ENCODE measurements at regions of chr6 and their contacts with region 1.

Region 1: GRCh38 chr6:107318100-107318736 is 141.1 kb downstream of the PDSS2 start:
- H3K4me3 ChIP-seq: no peak overlapping the region
- H3K27ac ChIP-seq: no peak overlapping the region
- H3K4me1 ChIP-seq: peaks cover 5% of the 10 kb centered on the region; the same call in 1 of the 2 replicates
- CTCF ChIP-seq: peak; percentile 48; the same call in 1 of the 2 replicates

Region 2: DNA sequence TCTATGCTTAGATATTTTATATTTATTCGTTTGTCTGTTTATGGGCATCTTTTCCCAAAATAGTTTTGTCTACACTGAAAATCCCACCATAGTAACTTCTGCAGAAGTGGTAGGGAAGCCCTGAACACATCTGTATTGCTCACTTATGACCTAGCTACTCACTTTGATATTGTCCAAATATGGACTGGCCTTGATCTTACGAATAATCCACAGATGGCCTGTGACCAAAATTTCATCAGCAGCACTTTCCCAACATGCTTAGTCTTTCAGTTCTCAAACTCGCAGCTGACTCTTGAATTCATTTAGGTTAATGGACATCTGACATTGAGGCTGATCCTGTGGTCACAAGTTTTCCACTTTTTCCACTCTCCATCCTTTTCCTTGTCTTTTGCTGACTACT is 122.1 kb before region 1 on chr6:
- CTCF ChIA-PET with region 1: no interaction called
- POLR2A ChIA-PET with region 1: no interaction called
- H3K4me3 ChIP-seq: no peak overlapping the region
- H3K27ac ChIP-seq: no peak overlapping the region
- H3K4me1 ChIP-seq: no peaks in the 10 kb centered on the region; the same call in 1 of the 2 replicates
- CTCF ChIP-seq: no peak

Region 3: DNA sequence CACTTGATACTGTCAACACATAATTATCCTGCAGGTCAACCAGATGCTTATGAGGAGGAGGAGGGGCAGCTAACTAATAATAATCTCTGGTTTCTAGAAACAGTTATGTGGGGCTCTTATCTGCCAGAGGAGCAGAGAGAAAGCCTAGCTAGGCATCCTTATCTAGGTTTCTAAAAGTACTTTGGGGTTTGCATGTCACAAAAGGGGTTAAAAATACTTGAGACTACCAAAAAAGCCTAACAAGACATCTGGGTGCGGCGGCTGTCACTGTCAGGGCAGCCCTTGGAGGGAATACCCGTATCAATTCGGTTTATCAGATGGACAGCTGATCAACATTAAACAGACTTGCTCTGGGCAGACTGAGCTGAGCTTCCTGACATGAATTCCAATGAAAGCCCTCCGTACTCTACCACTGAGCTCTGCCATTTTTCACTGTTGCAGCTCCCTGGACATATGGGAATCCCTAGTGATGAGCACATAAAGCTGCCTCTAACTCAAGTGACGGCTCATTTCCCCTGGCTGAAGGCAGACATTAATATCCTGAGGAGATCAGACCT is 25.4 kb before region 1 on chr6:
- CTCF ChIA-PET with region 1: interaction called, 14 read pairs
- POLR2A ChIA-PET with region 1: no interaction called
- H3K4me3 ChIP-seq: no peak overlapping the region
- H3K27ac ChIP-seq: no peak overlapping the region
- H3K4me1 ChIP-seq: no peaks in the 10 kb centered on the region; the same call in 1 of the 2 replicates
- CTCF ChIP-seq: no peak

Region 4: GRCh38 chr6:107342144-107342543 is 23.9 kb after region 1 on chr6:
- CTCF ChIA-PET with region 1: interaction called, 19 read pairs
- POLR2A ChIA-PET with region 1: no interaction called
- H3K4me3 ChIP-seq: no peak overlapping the region
- H3K27ac ChIP-seq: no peak overlapping the region
- H3K4me1 ChIP-seq: no peaks in the 10 kb centered on the region
- CTCF ChIP-seq: no peak

Region 5: DNA sequence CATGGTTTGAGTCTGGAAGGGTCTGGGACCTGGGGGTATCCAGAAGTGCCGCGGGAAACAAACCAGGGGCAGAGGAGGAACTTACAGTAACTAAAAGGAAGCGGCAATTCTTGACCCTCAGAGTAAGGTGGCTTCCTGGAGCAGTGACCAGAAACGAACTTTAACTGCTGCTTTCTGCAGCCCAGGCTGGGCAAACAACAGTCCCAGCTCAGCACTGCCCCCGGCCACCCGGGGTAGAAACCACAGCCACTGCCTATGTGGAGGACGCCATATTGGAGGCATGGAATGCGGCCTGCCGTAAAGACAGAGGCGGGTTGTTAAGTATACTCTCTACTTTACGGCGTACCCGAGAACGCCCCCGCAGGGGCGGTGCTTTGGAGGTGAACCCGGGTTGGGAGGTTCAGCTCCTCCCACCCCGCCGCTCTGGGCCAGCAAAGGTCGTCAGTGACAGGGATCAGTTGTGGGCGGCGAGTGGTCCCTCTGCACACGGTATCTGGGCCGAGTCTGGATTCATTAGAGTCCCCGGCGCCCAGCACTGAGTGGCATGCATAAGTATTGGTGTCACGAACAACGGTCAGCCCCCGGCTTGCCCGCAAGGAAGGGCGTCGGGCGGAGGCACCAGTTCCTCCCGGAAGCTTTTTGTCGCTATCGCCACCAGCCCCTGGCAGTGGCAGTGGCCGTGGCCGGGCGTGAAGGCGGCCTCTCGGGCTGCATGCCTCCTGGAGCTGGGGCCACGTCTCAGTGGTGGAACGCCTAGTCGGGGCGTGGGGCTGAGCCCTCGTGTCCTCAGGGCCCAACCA is 141.3 kb after region 1 on chr6 and contains the start of gene PDSS2:
- CTCF ChIA-PET with region 1: interaction called, 16 read pairs
- POLR2A ChIA-PET with region 1: interaction called, 13 read pairs
- H3K4me3 ChIP-seq: peak within 1 kb of the TSS; percentile 70
- H3K27ac ChIP-seq: peak within 1 kb of the TSS; percentile 91
- H3K4me1 ChIP-seq: no peaks in the 10 kb centered on the region; the same call in 1 of the 2 replicates
- CTCF ChIP-seq: peak; percentile 95

Region 6: GRCh38 chr6:107674995-107675738 is 356.9 kb after region 1 on chr6:
- CTCF ChIA-PET with region 1: interaction called, 25 read pairs
- POLR2A ChIA-PET with region 1: interaction called, 4 read pairs
- H3K4me3 ChIP-seq: peak overlapping the region; percentile 28
- H3K27ac ChIP-seq: peak overlapping the region; percentile 1; the same call in 1 of the 2 replicates
- H3K4me1 ChIP-seq: 0 out of 2 replicates have a peak, but pooled peaks cover 4% of the 10 kb centered on the region
- CTCF ChIP-seq: peak; percentile 99

Region 7: DNA sequence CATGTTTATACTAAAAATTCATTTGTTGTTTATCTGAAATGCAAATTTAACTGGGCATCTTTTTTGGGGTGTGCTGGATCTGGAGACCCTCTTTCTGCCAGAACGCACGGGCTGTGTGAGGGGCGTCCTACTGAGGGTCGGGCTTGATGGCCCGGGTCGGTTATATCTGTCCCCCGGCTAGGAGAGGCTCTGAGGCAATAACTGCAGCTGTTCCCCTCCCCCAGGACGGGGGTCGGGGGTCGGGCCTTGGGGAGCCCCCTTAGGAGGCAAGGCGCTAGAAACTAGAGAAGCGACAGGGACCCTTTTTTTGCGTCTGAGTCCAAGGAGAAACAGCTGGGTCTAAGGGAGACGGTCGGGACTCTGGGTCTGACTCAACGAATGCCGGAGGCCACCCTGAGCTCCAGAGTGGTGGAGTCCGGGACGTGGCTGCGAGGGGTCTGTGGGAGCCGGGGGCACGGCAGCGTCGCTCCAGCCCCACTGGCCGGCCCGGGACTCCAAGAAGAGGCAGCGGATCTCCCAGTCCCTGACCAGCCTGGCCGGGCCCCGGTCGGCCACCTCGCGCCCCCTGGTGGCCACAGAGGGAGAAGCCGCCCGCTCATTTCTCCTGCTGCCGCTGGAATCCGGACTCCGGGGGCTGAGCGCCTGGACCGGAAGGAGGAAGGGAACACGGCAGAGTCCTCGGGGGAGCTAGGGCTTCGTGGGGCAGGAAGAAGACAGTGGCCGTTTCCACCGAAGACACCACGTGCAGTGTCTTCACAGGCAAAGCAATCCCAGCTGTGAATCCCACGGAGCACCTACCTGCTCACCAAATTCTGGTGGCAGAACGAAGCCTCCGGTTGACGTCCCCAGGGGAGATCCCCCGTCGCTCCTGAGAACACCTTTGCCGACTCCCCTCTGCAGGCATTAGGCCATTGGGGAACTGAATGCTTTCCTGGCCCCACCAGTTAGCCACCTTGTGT is 529.9 kb after region 1 on chr6:
- CTCF ChIA-PET with region 1: interaction called, 10 read pairs
- POLR2A ChIA-PET with region 1: no interaction called
- H3K4me3 ChIP-seq: peak overlapping the region; percentile 35
- H3K27ac ChIP-seq: no peak overlapping the region
- H3K4me1 ChIP-seq: no peaks in the 10 kb centered on the region
- CTCF ChIP-seq: peak; percentile 93

Measured in HEK293 (cell line).